WTC11 (cell line): ENCODE measurements at regions of chr9 and their contacts with region 1.

Region 1: DNA sequence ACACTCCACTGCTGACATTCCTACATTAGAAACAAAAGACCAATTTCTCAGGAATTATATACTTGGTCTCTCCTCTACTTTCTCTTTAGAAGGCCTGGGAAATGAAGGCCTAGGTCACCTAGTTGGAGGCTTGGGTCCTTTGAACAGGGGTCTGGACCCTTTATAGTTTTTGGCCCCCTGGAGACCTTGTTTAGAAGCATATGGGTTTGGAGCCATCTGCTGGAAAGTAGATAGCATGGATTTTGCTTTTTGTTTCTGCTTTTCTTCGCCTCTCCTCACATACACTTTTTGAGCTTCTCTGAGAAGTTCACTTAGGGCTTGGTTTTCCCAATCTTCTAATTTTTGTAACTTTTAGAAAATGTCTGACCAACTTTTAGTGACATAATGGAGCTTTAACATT is 67.1 kb upstream of the CDK20 start:
- DNase-seq: no peak
- ATAC-seq: peak; percentile 56
- H3K4me3 Mint-ChIP-seq: no peak overlapping the region
- H3K27ac Mint-ChIP-seq: no peak overlapping the region
- H3K4me1 Mint-ChIP-seq: peaks cover 23% of the 10 kb centered on the region
- H3K27me3 Mint-ChIP-seq: peaks cover 8% of the 10 kb centered on the region
- CTCF ChIP-seq: peak; percentile 29; the same call in 1 of the 2 replicates

Region 2: DNA sequence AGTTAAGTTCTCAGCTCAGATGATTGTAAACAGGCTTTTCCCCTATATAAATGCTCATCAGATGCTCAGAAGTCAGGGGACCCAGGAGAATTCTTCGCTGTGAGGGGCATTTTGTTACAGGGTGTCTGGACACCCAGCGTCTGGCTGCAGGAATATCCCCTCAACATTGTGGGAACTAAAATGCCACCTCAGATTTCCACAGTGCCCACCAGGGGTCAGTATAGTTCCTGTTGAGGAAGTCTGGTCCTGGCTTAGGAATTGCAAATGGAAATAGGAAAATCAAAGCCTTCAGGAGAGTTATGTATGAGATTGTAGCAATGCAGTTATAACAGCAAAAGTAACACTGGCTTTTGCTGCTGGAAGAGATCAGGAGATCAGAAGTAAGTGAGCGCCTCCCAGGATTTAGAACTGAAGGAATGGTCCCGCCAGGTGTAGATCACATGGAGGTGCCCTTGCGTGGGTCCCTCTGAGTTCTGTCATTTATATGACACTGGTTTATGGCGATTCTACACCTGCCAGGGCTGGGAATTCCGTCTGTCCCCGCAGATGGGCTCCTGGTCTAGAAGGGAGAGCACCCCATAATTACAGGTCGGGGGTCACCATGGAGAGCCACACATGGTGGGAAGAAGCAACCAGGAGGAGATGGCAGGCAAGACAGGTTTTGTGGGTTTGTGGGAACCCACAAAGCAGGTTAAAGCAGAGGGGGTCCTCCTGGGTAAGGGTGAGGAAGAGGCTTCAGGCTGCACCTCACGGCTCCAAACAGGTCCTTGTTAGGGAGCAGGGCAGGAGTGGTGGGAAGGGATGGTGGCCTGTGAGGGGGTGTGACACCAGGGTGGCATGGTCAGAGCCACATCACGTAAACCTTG is 362.6 kb before region 1 on chr9:
- CTCF ChIA-PET with region 1: no interaction called
- POLR2A ChIA-PET with region 1: no interaction called
- DNase-seq: peak; percentile 69
- ATAC-seq: peak; percentile 74
- H3K4me3 Mint-ChIP-seq: no peak overlapping the region
- H3K27ac Mint-ChIP-seq: no peak overlapping the region
- H3K4me1 Mint-ChIP-seq: peaks cover 6% of the 10 kb centered on the region
- H3K27me3 Mint-ChIP-seq: no peaks in the 10 kb centered on the region
- CTCF ChIP-seq: peak; percentile 53

Region 3: GRCh38 chr9:87950765-87951488 is 90.5 kb before region 1 on chr9:
- CTCF ChIA-PET with region 1: interaction called, 31 read pairs
- POLR2A ChIA-PET with region 1: no interaction called
- DNase-seq: no peak
- ATAC-seq: peak; percentile 77
- H3K4me3 Mint-ChIP-seq: no peak overlapping the region
- H3K27ac Mint-ChIP-seq: no peak overlapping the region
- H3K4me1 Mint-ChIP-seq: no peaks in the 10 kb centered on the region
- H3K27me3 Mint-ChIP-seq: no peaks in the 10 kb centered on the region
- CTCF ChIP-seq: peak; percentile 41; the same call in 1 of the 2 replicates